Sigmoid colon (tissue), 7 donors: ENCODE measurements at regions of chr5 and their contacts with region 1.

Region 1: DNA sequence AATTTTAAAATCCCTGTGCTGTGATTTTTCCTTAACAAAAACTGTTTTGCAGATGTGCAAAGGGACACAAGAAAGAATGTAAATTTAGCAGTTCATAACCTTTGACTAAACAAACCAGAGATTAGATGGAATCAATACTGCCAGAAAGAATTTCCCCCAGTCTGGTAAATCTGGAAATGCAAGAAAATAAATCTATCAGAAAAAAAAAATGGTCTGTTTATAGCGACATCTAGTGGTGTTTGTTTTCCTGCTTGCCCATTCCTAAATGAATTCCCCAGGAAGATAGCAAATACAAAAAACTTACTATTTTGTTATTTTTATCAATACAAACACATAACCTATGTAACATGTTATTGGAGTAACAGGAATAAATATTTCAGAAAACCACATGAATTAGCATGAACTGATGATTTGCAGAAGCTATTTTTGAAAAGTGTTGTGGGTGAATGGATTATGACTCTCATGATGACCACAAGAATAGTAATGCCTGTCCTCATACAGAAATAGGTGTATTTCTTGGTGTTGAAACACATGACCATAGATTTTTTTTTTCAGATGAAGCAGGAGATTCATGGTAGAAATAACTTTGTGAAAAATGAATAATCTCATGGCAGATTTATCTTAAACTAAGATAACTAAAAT is 1703.8 kb downstream of the MAT2B start:
- DNase-seq: no peak
- H3K4me3 ChIP-seq: no peak overlapping the region
- H3K27ac ChIP-seq: no peak overlapping the region
- H3K4me1 ChIP-seq: no peaks in the 10 kb centered on the region
- H3K27me3 ChIP-seq: no peaks in the 10 kb centered on the region
- CTCF ChIP-seq: peak; percentile 10 to 53 (median 26)
- EP300 ChIP-seq: no peak
- POLR2A ChIP-seq: no peak

Region 2: GRCh38 chr5:164013077-164013670 is 1196.0 kb before region 1 on chr5:
- intact Hi-C with region 1: loop called (anchors 5 kb)
- DNase-seq: peak; percentile 69
- H3K4me3 ChIP-seq: no peak overlapping the region
- H3K27ac ChIP-seq: no peak overlapping the region
- H3K4me1 ChIP-seq: peaks cover 0 to 17% (median 0%) of the 10 kb centered on the region in 4 donors
- H3K27me3 ChIP-seq: no peaks in the 10 kb centered on the region
- CTCF ChIP-seq: peak; percentile 24 to 73 (median 63)
- EP300 ChIP-seq: no peak
- POLR2A ChIP-seq: no peak

Region 3: GRCh38 chr5:165673499-165673898 is 464.3 kb after region 1 on chr5:
- intact Hi-C with region 1: no loop called
- DNase-seq: no peak
- H3K4me3 ChIP-seq: no peak overlapping the region
- H3K27ac ChIP-seq: no peak overlapping the region
- H3K4me1 ChIP-seq: peaks cover 0 to 13% (median 5%) of the 10 kb centered on the region in 4 donors
- H3K27me3 ChIP-seq: no peaks in the 10 kb centered on the region
- CTCF ChIP-seq: no peak
- EP300 ChIP-seq: no peak
- POLR2A ChIP-seq: no peak